ENCODE measurements at regions of chr6 and their contacts with region 1.

Region 1: DNA sequence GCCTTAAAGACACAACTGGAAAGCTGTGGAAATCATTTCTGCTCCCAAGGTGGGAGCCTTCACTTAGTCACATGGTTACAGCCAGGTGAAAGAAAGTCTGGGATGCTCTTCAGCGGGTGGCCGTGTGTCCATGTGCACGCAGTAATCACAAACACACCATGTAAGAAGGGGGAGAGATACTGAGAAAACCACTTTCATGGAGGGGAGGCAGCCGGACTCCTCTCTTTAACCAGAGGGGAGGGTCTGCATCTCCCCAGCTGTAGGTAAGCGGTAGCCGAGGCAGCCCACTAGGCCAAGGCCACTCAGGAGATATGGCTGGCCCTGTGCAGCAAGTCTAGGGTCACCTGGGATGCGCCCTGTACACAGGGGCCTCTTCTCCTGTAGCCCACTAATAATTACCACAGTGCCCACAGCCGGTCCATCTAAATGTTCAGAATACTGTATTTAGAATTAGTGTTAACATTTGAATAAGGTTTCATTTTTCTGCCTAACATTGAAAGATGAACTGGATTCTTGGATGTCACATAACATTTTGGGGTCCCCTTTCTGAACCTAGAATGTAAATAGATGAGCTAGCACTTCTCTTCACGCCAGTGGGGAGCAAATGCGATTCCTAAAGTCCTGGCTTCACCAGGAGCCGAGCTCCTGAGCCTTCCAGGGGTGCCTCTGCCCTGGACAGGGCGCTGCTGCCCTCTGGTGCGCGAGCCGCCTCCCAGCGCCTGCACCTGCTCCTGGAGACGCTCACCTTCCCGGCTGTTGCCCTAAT is 15.9 kb downstream of the GPR31 start:
- DNase-seq: peak; percentile 57
- H3K4me3 Mint-ChIP-seq: no peak overlapping the region
- H3K27ac Mint-ChIP-seq: no peak overlapping the region
- H3K4me1 Mint-ChIP-seq: peaks cover 3% of the 10 kb centered on the region
- H3K27me3 Mint-ChIP-seq: peaks cover 32% of the 10 kb centered on the region

Region 2: GRCh38 chr6:166775180-166776081 is 366.4 kb before region 1 on chr6:
- CTCF ChIA-PET with region 1: interaction called, 41 read pairs
- DNase-seq: peak; percentile 71
- H3K4me3 Mint-ChIP-seq: no peak overlapping the region
- H3K27ac Mint-ChIP-seq: no peak overlapping the region
- H3K4me1 Mint-ChIP-seq: peaks cover 4% of the 10 kb centered on the region
- H3K27me3 Mint-ChIP-seq: peaks cover 30% of the 10 kb centered on the region